GM12878 (cell line): ENCODE measurements at regions of chr15 and their contacts with region 1.

Region 1: DNA sequence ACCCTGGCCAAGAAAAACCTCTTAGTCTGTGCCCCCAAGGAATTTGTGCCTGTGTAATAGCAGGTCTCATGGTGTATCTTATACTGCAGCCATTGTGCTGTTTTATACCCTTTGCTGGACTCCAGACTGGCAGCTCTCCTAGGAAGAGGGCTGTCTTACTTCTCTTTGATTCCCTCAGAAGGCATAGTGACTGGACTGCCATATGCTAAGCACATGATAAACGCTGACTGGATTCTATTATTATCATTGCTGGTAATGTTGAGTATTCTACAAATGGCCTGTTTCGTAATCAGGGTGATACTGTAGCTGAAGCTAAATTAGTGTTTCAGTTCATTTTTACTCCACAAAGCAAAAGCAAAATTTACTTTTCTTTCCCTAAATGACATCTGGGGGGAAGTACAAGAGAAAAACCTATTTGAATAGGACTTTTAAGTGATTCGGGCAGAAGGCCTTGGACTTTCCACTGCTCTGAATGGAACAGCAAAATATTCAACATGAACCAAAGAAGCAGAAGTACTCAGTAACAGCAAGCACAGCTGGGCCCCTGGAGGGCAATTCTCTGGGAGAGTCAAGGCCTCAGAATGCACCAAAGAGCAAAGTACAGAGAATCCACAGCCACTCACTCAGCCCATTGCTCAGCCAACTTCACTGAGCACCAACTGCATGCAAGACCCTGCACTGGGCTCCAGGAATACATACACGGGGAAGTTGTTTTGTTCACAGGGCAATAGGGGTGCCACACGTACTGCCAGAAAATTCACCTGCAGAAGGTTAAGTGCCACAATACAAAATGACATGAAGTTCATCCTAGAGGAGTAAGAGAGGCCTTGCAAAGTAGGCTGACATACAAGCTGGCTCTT is 7.9 kb upstream of the BCL2A1 start:
- DNase-seq: peak; percentile 95
- ATAC-seq: peak; percentile 74
- H3K4me3 ChIP-seq: peak overlapping the region; percentile 47; the same call in 1 of the 2 replicates
- H3K27ac ChIP-seq: peak overlapping the region; percentile 99
- H3K4me1 ChIP-seq: peaks cover 71% of the 10 kb centered on the region
- H3K27me3 ChIP-seq: no peaks in the 10 kb centered on the region
- CTCF ChIP-seq: no peak
- EP300 ChIP-seq: peak; percentile 78 to 87; a peak in 2 of 4 replicates
- POLR2A ChIP-seq: no peak
- RAD21 ChIP-seq: peak; percentile 19; the same call in 1 of the 2 replicates

Region 2: DNA sequence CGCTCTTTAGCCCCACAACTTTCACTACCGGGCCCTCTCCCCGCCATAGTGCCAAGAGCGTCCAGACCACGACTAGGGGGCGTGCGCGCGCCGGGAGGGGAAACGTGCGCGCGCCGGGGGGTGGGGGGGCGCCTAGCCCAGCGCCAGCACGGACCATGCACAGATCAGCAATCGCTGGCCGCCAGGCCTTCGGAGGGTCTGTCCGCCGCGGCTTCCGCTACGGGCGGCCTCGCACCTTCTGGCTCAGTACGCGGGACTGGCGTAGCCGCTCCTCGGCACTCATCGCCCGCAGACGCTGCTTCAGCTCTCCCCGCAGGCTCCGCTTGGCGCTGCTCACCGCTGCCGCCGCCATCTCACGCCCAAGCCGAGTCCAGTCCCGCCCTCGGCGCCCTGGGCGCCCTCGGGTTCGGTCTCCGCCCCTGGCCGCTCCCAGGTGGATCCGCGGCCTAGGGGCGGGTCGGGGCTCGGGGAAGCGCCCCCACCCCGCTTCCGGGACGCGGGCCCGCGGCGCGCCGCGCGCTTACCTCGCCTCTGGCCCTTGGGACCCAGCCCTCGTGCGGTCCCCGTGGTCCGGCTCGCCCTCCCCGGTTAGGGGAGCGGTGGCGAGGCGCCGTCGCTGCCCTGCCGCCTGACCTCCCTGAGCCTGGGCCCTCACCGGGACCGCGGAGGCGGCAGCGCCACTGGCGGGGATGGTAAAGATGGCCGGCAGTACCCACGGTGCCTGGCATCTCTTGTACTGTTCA is 82.1 kb before region 1 on chr15 and contains the start of gene MTHFS:
- CTCF ChIA-PET with region 1: interaction called, 8 read pairs
- POLR2A ChIA-PET with region 1: interaction called, 7 read pairs
- RAD21 ChIA-PET with region 1: interaction called, 19 read pairs
- SMC1A ChIA-PET with region 1: interaction called, 38 read pairs
- in situ Hi-C with region 1: no loop called
- intact Hi-C with region 1: no loop called
- DNase-seq: no peak
- ATAC-seq: peak; percentile 86
- H3K4me3 ChIP-seq: peak within 1 kb of the TSS; percentile 66
- H3K27ac ChIP-seq: peak within 1 kb of the TSS; percentile 85
- H3K4me1 ChIP-seq: peaks cover 16% of the 10 kb centered on the region
- H3K27me3 ChIP-seq: no peaks in the 10 kb centered on the region
- CTCF ChIP-seq: peak; percentile 44 to 62 (median 54)
- EP300 ChIP-seq: 0 out of 4 replicates have a peak, but pooled peaks of 1 of the 2 experiments have one; percentile 26
- POLR2A ChIP-seq: peak; percentile 94
- RAD21 ChIP-seq: peak; percentile 57
- polyA plus RNA-seq, gene MTHFS: 14.0 to 24.5 TPM

Region 3: DNA sequence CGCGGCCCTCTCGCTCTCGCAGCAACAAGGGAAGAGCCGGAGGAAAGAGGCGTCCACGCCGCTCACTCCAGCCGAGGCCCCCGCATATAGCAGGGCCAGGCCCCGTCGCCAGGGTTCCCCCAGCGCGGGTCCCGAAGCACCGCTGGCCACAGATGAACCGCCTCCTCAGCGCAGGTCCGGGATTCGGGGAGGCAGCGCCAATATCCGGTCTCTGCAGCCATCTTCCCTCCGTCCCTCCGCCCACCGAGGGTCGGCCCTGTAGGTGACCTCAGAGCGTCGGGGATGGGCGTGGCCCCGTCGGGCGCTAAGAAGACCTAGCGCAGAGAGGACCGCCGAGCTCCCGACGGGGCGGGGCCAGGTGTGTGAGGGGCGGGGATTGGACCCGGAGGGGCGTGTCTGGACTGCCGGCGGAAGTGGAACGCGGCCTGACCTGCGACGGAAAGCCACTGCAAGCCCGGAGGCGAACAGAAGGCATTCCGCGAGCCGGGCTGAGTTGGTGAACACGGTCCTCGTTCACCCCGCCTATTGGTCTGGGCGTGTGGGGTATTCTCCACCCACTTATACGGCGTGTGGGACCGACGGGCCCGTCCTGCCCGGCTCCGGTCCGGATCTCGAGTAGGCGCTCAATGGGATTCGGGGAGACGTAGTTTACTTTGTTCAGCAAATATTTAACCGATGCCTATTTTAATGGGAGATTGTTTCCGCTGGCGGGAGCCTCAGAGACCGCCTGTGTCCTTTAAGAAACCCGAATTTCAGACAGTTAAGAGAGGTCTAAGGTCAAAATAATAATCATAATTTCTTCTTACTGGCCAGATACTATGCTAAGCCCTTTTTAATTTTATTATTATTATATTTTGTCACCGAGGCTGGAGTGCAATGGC is 55.1 kb before region 1 on chr15:
- CTCF ChIA-PET with region 1: no interaction called
- POLR2A ChIA-PET with region 1: interaction called, 5 read pairs
- RAD21 ChIA-PET with region 1: interaction called, 10 read pairs
- SMC1A ChIA-PET with region 1: interaction called, 9 read pairs
- in situ Hi-C with region 1: no loop called
- intact Hi-C with region 1: no loop called
- DNase-seq: peak; percentile 94
- ATAC-seq: peak; percentile 97
- H3K4me3 ChIP-seq: peak overlapping the region; percentile 80
- H3K27ac ChIP-seq: peak overlapping the region; percentile 92
- H3K4me1 ChIP-seq: no peaks in the 10 kb centered on the region
- H3K27me3 ChIP-seq: no peaks in the 10 kb centered on the region
- CTCF ChIP-seq: no peak
- EP300 ChIP-seq: no peak
- POLR2A ChIP-seq: peak; percentile 94
- RAD21 ChIP-seq: 0 out of 2 replicates have a peak, but pooled peaks have one; percentile 2

Region 4: DNA sequence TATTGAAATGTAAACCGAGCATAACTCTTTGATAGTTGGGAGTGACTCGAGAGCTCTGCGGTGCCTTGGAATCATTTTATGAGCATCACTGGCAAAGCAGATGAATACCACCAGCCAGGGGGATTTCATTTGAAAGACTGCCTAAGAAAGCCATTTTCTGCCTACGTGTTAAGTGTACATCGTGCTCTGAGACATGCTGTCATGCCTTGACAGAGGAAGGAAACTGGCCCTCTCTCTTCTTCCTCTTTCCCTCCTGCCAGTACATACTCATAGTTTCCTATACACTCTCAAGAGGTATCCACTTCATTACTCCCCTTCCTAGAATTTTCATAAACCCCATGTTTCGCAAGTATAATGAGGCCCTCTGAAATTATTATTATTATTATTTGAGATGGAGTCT is 16.7 kb before region 1 on chr15:
- CTCF ChIA-PET with region 1: interaction called, 29 read pairs
- POLR2A ChIA-PET with region 1: interaction called, 66 read pairs
- RAD21 ChIA-PET with region 1: interaction called, 59 read pairs
- SMC1A ChIA-PET with region 1: interaction called, 40 read pairs
- in situ Hi-C with region 1: no loop called
- intact Hi-C with region 1: no loop called
- DNase-seq: no peak
- ATAC-seq: peak; percentile 53
- H3K4me3 ChIP-seq: peak overlapping the region; percentile 28
- H3K27ac ChIP-seq: peak overlapping the region; percentile 72
- H3K4me1 ChIP-seq: peaks cover 2% of the 10 kb centered on the region; the same call in 1 of the 2 replicates
- H3K27me3 ChIP-seq: no peaks in the 10 kb centered on the region
- CTCF ChIP-seq: no peak
- EP300 ChIP-seq: no peak
- POLR2A ChIP-seq: peak; percentile 37; the same call in 1 of the 2 replicates
- RAD21 ChIP-seq: no peak

Region 5: DNA sequence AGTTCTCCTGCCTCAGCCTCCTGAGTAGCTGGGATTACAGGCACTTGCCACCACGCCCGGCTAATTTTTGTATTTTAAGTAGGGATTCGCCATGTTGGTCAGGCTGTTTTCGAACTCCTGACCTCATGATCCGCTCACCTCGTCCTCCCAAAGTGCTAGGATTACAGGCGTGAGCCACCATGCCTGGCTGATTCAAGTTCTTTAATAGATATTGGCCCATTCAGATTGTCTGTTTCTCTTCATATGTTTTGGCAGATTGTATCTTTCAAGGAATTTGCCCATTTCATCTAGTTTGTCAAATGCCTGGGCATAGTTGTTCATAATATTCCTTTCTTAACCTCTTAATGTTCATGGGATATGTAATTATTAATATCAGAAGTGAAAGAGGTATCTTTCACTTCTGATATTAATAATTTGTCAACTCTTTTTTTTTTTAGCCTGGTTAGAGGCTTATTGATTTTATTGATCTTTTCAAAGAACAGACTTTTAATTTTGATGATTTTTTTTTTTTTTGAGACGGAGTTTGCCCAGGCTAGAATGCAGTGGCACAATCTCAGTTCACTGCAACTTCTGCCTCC is 40.4 kb after region 1 on chr15:
- CTCF ChIA-PET with region 1: interaction called, 3 read pairs
- POLR2A ChIA-PET with region 1: interaction called, 4 read pairs
- RAD21 ChIA-PET with region 1: interaction called, 13 read pairs
- SMC1A ChIA-PET with region 1: interaction called, 15 read pairs
- in situ Hi-C with region 1: no loop called
- intact Hi-C with region 1: no loop called
- DNase-seq: no peak
- ATAC-seq: peak; percentile 4
- H3K4me3 ChIP-seq: peak overlapping the region; percentile 60
- H3K27ac ChIP-seq: peak overlapping the region; percentile 92
- H3K4me1 ChIP-seq: peaks cover 30% of the 10 kb centered on the region
- H3K27me3 ChIP-seq: no peaks in the 10 kb centered on the region
- CTCF ChIP-seq: no peak
- EP300 ChIP-seq: peak; percentile 8 to 43; a peak in 1 of 4 replicates
- POLR2A ChIP-seq: no peak
- RAD21 ChIP-seq: no peak

Region 6: GRCh38 chr15:80219955-80220354 is 241.1 kb after region 1 on chr15:
- CTCF ChIA-PET with region 1: no interaction called
- POLR2A ChIA-PET with region 1: no interaction called
- RAD21 ChIA-PET with region 1: no interaction called
- SMC1A ChIA-PET with region 1: no interaction called
- in situ Hi-C with region 1: no loop called
- intact Hi-C with region 1: no loop called
- DNase-seq: no peak
- ATAC-seq: no peak
- H3K4me3 ChIP-seq: no peak overlapping the region
- H3K27ac ChIP-seq: no peak overlapping the region
- H3K4me1 ChIP-seq: no peaks in the 10 kb centered on the region
- H3K27me3 ChIP-seq: no peaks in the 10 kb centered on the region; a peak in 1 of 4 replicates
- CTCF ChIP-seq: no peak
- EP300 ChIP-seq: no peak
- POLR2A ChIP-seq: no peak
- RAD21 ChIP-seq: no peak